Right cardiac atrium (tissue), 5 donors: ENCODE measurements at regions of chr1 and their contacts with region 1.

Region 1: DNA sequence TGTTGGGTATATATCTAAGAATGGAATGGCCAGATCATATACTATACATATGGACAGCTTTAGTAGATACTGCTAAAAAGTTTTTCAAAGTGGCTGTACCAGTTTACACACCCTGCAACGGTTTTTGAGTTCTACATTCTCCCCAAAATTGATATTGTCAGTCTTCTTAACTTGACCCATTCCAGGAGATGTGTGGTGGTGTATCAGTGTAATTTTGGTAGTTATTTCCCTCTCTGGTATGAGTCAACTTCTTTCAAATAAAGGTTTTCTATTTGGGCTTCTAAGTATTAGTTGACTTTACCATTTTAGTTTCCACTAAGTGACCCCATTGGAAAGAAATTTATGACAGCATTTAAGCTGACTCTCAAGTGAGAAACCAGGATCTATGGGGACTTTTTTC is 29.2 kb downstream of the INKA2 start:
- DNase-seq: no peak
- ATAC-seq: no peak
- H3K4me3 ChIP-seq: no peak overlapping the region
- H3K27ac ChIP-seq: no peak overlapping the region
- H3K4me1 ChIP-seq: no peaks in the 10 kb centered on the region
- H3K27me3 ChIP-seq: no peaks in the 10 kb centered on the region

Region 2: DNA sequence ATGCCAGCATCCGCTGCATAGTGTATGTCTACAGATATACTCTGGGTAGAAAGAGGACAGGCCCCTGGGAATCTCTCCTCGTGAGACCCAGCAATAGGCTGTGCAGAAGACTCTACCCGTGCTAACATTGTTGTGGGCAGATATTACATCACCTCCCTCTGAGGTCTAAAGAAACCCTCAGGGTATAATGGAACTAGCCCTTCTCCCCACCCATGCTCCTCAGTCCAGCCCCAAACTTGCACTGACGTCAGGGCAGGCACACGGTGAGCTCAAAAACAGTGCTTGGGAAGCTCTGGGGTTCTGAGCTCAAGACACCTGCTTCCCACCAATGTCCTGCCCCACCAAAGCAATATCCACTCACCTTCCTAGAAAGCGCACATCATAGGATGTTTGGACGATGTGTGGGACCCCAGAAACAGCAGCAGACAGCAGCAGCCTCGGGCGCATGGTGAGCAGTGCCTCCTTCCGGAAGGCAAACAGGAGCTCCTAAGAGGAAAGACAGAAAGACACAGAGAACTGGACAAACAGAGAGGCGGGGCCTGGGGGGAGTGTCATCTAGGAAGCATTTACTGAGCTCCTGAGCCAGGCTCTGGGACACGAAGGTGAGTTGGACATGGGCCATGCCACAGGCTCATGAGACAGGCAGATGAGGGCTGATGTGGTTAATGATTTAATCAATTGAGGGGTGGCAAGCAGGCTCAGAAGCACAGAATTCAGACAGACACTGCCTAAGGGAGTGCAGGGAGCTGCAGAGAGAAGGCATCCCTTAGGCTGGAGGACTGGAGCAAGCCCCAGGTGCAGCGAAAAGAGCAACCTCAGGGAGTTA is 287.2 kb before region 1 on chr1:
- intact Hi-C with region 1: no loop called
- DNase-seq: no peak
- ATAC-seq: no peak
- H3K4me3 ChIP-seq: no peak overlapping the region
- H3K27ac ChIP-seq: no peak overlapping the region
- H3K4me1 ChIP-seq: no peaks in the 10 kb centered on the region
- H3K27me3 ChIP-seq: no peaks in the 10 kb centered on the region

Region 3: DNA sequence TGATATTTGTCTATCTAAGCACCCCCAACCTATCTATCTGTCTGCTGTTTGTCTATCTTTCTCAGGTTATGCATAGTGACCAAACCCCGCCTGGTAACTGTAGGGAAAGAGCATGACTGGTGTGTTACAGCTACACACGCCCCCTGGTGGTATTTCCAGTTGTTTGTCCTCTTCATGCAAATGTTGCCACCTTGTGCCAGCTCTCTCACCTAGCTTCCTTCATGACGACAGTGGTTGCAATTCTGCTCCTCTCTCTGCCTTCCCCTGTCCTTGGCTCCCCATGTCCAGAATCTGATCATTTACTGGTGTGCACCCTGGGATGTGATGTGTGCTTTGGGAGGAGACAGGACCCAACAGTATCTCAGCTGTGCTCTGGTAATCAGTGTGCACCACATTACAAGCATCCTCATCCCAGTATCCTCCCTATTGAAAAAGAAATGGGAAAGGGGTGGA is 37.3 kb after region 1 on chr1:
- intact Hi-C with region 1: loop called in 3 of 4 experiments (anchors 5 kb)
- DNase-seq: peak in 2 of 3 donors; percentile 52 to 63
- ATAC-seq: peak; percentile 20 to 52
- H3K4me3 ChIP-seq: no peak overlapping the region
- H3K27ac ChIP-seq: no peak overlapping the region
- H3K4me1 ChIP-seq: peaks cover 8% of the 10 kb centered on the region
- H3K27me3 ChIP-seq: no peaks in the 10 kb centered on the region